ENCODE measurements at regions of chr14 and their contacts with region 1.

Region 1: DNA sequence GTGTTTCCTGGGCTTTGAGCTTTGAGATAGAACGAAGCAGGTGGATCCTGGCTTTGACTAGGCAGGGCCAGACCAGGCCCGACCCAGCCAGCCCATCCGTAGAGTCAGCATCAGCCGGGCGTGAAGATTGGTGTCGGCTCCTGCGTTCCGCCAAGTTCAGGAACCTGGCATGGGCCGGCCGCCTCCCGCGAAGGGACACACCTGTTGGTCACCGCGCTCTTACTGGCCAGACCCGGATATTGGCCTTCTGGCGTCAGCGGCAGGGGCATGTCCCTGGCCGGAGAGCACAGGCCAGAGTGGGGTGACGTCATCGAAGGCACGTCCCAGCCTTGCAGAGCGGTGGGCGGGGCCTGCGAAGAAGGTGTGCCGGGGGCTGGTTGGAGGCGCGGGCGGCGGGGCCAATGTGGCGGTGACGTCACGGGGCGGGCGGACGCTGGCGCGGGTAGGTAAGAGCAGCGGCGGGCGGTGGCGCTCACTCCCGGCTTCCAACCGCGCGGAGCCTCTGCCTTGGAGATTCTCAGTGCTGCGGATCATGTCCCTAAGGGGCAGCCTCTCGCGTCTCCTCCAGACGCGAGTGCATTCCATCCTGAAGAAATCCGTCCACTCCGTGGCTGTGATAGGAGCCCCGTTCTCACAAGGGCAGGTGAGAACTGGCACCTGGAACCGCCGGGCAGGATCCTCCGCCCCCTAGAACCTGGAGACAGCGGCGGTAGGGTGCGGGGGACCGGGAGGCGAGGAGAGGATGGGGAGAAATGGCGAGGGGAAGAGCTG is at the start of gene ARG2:
- DNase-seq: peak; percentile 96
- H3K4me3 Mint-ChIP-seq: peak within 1 kb of the TSS; percentile 83
- H3K27ac Mint-ChIP-seq: peak within 1 kb of the TSS; percentile 84
- H3K4me1 Mint-ChIP-seq: peaks cover 30% of the 10 kb centered on the region
- H3K27me3 Mint-ChIP-seq: no peaks in the 10 kb centered on the region
- CTCF ChIP-seq: no peak
- total RNA-seq, gene ARG2: 11.7 and 17.6 TPM in 2 replicates

Region 2: DNA sequence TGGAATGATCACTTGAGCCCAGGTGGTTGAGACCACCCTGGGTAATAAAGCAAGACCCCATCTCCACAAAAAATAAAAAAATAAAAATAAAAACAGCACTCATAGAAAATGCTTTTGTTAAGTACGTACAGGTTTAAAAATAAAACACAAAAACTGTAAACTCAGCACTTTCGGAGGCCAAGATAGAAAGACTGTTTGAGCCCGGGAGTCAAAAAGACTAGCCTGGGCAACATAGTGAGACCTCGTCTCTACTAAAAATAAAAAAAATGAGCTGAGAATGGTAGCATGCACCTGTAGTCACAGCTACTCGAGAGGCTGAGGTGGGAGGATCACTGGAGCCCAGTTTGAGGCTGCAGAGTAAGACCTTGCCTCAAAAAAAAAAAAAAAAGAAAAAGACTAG is 267.6 kb before region 1 on chr14:
- CTCF ChIA-PET with region 1: no interaction called
- POLR2A ChIA-PET with region 1: no interaction called
- intact Hi-C with region 1: no loop called
- DNase-seq: no peak
- H3K4me3 Mint-ChIP-seq: no peak overlapping the region
- H3K27ac Mint-ChIP-seq: peak overlapping the region; percentile 63
- H3K4me1 Mint-ChIP-seq: peaks cover 16% of the 10 kb centered on the region
- H3K27me3 Mint-ChIP-seq: no peaks in the 10 kb centered on the region
- CTCF ChIP-seq: no peak

Region 3: GRCh38 chr14:67583711-67584644 is 35.7 kb before region 1 on chr14:
- CTCF ChIA-PET with region 1: interaction called, 16 read pairs
- POLR2A ChIA-PET with region 1: interaction called, 3 read pairs
- intact Hi-C with region 1: loop called (anchors 1 kb)
- DNase-seq: peak; percentile 66
- H3K4me3 Mint-ChIP-seq: no peak overlapping the region
- H3K27ac Mint-ChIP-seq: no peak overlapping the region
- H3K4me1 Mint-ChIP-seq: no peaks in the 10 kb centered on the region
- H3K27me3 Mint-ChIP-seq: no peaks in the 10 kb centered on the region
- CTCF ChIP-seq: peak; percentile 65

Region 4: GRCh38 chr14:67607646-67608045 is 12.0 kb before region 1 on chr14:
- CTCF ChIA-PET with region 1: interaction called, 17 read pairs
- POLR2A ChIA-PET with region 1: interaction called, 23 read pairs
- intact Hi-C with region 1: no loop called
- DNase-seq: no peak
- H3K4me3 Mint-ChIP-seq: no peak overlapping the region
- H3K27ac Mint-ChIP-seq: no peak overlapping the region
- H3K4me1 Mint-ChIP-seq: no peaks in the 10 kb centered on the region
- H3K27me3 Mint-ChIP-seq: no peaks in the 10 kb centered on the region
- CTCF ChIP-seq: no peak

Region 5: GRCh38 chr14:67650694-67651093 is 31.1 kb after region 1 on chr14:
- CTCF ChIA-PET with region 1: interaction called, 21 read pairs
- POLR2A ChIA-PET with region 1: interaction called, 4 read pairs
- intact Hi-C with region 1: no loop called
- DNase-seq: peak; percentile 74
- H3K4me3 Mint-ChIP-seq: peak overlapping the region; percentile 14
- H3K27ac Mint-ChIP-seq: peak overlapping the region; percentile 93
- H3K4me1 Mint-ChIP-seq: peaks cover 16% of the 10 kb centered on the region
- H3K27me3 Mint-ChIP-seq: no peaks in the 10 kb centered on the region
- CTCF ChIP-seq: no peak

Region 6: DNA sequence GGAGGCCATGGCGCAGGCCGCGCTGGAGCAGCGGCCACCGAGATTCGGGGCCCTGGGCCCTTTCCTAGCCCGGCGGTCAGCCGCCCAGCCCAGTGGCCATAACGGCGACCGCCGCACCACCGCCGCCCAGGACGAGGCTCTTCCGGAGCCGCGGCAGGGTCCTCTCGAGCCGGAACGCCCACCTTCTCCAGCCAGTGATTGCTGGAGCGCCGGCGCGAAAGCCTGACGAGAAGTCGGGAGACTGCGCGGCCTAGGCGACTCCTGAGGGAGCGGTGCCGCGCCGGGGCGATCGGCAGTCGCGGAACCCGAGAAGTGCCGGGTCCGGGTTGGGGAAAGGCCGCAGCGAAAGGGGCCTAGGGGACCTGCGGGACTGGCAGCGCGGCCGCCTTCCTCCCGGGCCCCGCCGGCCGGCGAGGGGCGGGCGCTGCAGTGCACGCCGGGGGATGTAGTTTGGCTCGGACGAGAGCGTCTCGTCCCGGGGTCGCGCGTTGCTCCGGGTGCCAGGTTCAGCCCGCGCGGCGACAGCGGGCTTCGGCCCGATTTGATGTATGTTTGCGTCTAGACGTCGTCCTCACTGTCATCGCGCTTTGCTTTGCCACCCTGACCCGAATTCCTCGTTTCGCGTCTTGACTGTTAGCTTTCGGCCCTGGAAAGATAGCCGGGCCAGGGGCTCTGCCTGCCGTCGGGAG is 55.0 kb after region 1 on chr14 and contains the start of gene VTI1B:
- CTCF ChIA-PET with region 1: interaction called, 9 read pairs
- POLR2A ChIA-PET with region 1: interaction called, 10 read pairs
- intact Hi-C with region 1: no loop called
- DNase-seq: peak; percentile 67
- H3K4me3 Mint-ChIP-seq: peak within 1 kb of the TSS; percentile 86
- H3K27ac Mint-ChIP-seq: peak within 1 kb of the TSS; percentile 88
- H3K4me1 Mint-ChIP-seq: peaks cover 27% of the 10 kb centered on the region
- H3K27me3 Mint-ChIP-seq: no peaks in the 10 kb centered on the region
- CTCF ChIP-seq: no peak
- total RNA-seq, gene VTI1B: 57.5 and 84.3 TPM in 2 replicates

Region 7: GRCh38 chr14:67704484-67705089 is 85.0 kb after region 1 on chr14:
- CTCF ChIA-PET with region 1: interaction called, 38 read pairs
- POLR2A ChIA-PET with region 1: interaction called, 6 read pairs
- intact Hi-C with region 1: loop called (anchors 1 kb)
- DNase-seq: peak; percentile 70
- H3K4me3 Mint-ChIP-seq: no peak overlapping the region
- H3K27ac Mint-ChIP-seq: no peak overlapping the region
- H3K4me1 Mint-ChIP-seq: peaks cover 9% of the 10 kb centered on the region
- H3K27me3 Mint-ChIP-seq: no peaks in the 10 kb centered on the region
- CTCF ChIP-seq: peak; percentile 75

Region 8: DNA sequence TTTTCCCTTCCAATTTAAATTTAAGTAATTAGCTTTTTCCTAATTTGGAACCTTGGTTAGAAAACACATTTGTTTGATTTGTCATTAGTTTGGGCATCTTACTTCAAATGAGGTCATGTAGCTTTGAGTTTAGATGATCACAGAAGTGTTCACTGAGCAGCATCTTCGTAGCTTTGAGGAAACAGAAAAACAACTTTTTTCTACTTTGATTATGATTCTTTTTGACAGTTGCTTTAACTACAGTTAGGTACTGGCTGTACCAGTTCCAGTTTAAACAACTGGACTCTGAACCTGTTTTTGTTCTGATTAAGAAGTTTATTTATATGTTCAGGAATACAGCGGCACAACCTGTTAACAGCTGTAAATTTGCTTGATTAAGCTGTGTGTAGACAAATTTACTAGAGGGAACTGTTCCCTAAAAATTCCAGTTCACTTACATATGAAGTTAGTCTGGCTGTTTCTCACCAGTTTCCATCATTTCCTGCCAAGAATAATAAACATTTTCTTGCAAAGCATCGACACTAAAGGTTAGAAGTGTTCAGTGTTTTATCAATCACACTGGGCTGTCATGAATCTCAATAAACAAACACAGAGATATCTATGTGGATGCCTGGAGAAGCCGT is 391.9 kb after region 1 on chr14:
- CTCF ChIA-PET with region 1: no interaction called
- POLR2A ChIA-PET with region 1: no interaction called
- intact Hi-C with region 1: no loop called
- DNase-seq: peak; percentile 27
- H3K4me3 Mint-ChIP-seq: no peak overlapping the region
- H3K27ac Mint-ChIP-seq: no peak overlapping the region
- H3K4me1 Mint-ChIP-seq: peaks cover 4% of the 10 kb centered on the region
- H3K27me3 Mint-ChIP-seq: no peaks in the 10 kb centered on the region
- CTCF ChIP-seq: no peak